ENCODE measurements at regions of chr20 and their contacts with region 1.

Region 1: GRCh38 chr20:31951530-31952453 is at the start of gene PDRG1:
- DNase-seq: peak; percentile 68
- H3K4me3 ChIP-seq: peak within 1 kb of the TSS; percentile 56
- H3K27me3 ChIP-seq: peaks cover 4% of the 10 kb centered on the region
- CTCF ChIP-seq: peak; percentile 99
- polyA plus RNA-seq, gene PDRG1: 13.9 and 16.5 TPM in 2 replicates

Region 2: GRCh38 chr20:31856516-31856915 is 95.3 kb before region 1 on chr20:
- CTCF ChIA-PET with region 1: interaction called, 71 read pairs
- POLR2A ChIA-PET with region 1: no interaction called
- DNase-seq: no peak
- H3K4me3 ChIP-seq: no peak overlapping the region
- H3K27me3 ChIP-seq: peaks cover 44% of the 10 kb centered on the region
- CTCF ChIP-seq: no peak

Region 3: GRCh38 chr20:31962761-31963160 is 11.0 kb after region 1 on chr20:
- CTCF ChIA-PET with region 1: interaction called, 13 read pairs
- POLR2A ChIA-PET with region 1: no interaction called
- DNase-seq: no peak
- H3K4me3 ChIP-seq: no peak overlapping the region
- H3K27me3 ChIP-seq: peaks cover 24% of the 10 kb centered on the region
- CTCF ChIP-seq: no peak

Region 4: DNA sequence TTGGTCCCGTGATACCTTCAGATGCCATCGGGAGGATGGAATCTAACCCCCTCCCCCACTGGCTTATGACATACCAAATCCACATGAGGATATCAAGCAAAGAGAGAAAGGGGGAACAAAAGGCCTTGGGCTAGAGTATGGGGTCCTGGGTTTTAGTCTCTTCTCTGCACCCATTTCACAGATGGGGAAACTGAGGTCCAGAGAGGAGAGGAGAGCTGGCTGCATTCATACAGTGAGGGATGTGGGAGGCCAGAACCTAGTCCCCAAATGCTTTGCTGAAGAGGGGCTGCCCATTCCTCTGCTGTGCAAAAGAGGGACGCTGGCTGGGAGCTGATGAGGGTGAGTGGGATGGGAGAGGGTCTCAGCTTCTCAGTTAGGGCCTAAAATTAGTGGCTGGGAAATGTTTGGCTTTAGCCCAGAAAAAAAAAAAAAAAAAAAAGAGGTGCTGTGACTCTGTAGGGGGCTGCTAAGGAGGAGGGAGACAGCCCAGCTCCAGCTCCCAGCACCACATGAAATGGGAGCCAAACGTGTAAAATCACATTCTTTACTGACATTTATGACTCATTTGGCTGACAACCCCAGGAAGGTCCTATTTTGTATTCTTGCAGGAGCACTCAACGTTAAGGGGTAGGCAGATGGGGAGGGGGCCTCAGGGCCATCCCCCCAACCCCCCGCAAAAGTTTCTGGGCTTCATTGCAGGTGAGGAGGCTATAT is 28.1 kb after region 1 on chr20:
- CTCF ChIA-PET with region 1: interaction called, 3 read pairs
- POLR2A ChIA-PET with region 1: interaction called, 15 read pairs
- DNase-seq: no peak
- H3K4me3 ChIP-seq: no peak overlapping the region
- H3K27me3 ChIP-seq: peaks cover 12% of the 10 kb centered on the region
- CTCF ChIP-seq: no peak